ENCODE measurements at regions of chr14 and their contacts with region 1.

Region 1: GRCh38 chr14:32252030-32252670 is 49.1 kb upstream of the RNU6-8 start:
- DNase-seq: peak; percentile 62
- ATAC-seq: peak; percentile 89
- H3K4me3 ChIP-seq: no peak overlapping the region
- H3K27ac ChIP-seq: no peak overlapping the region
- H3K4me1 ChIP-seq: peaks cover 0 to 10% of the 10 kb centered on the region in 2 experiments; a peak in 2 of 4 replicates
- H3K27me3 ChIP-seq: no peaks in the 10 kb centered on the region
- CTCF ChIP-seq: peak; percentile 81 to 93 (median 89)
- POLR2A ChIP-seq: no peak
- RAD21 ChIP-seq: peak; percentile 96

Region 2: DNA sequence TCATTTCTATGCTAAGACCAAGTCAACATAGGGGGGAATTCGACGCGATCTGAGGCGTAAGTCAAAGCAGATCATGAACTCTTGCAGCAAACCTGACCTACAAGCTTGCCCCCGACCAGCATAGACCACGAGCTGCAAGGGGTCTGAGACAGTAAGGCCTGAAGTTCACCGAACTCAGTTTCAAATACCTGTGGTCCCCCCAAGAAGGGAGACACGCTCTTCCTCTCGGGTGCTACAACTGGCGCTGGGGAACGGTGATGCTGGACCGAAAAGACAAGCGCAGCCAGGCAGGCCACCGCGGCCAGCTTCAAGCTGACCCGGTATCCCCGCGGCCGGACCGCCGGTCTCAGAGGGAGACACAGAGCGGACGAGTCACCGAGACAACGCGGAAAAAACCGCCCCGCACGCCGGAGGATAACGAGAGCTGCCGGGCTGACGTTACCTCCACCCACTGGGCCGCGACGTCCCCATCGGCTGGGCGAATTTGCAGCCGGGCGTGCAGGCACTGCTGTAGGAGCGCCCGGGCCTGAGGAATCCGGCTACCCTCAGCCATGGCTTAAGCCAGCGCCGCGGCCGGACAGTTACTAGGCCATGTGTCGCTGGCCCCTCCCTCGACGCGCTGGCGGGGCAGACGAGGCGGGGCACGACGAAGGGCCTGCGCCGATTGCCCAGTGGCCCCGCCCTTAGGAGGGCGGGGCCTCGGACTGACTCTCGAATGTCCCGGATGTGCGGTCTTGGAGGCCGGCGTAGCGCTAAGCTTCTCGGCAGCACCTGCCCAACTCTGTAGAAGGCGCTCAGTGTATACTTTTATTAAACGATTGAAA is 795.1 kb before region 1 on chr14 and contains the start of gene DTD2:
- CTCF ChIA-PET with region 1: interaction called, 5 read pairs
- POLR2A ChIA-PET with region 1: no interaction called
- RAD21 ChIA-PET with region 1: no interaction called
- intact Hi-C with region 1: loop called (anchors 10 kb)
- DNase-seq: peak; percentile 90
- ATAC-seq: peak; percentile 99
- H3K4me3 ChIP-seq: peak within 1 kb of the TSS; percentile 86 to 88
- H3K27ac ChIP-seq: peak within 1 kb of the TSS; percentile 76
- H3K4me1 ChIP-seq: peaks cover 4 to 11% of the 10 kb centered on the region in 2 experiments; a peak in 2 of 4 replicates
- H3K27me3 ChIP-seq: no peaks in the 10 kb centered on the region
- CTCF ChIP-seq: no peak
- POLR2A ChIP-seq: peak; percentile 81
- RAD21 ChIP-seq: no peak; the same call in 1 of the 2 replicates
- total RNA-seq, gene DTD2: 24.6 TPM

Region 3: GRCh38 chr14:31926123-31926522 is 326.0 kb before region 1 on chr14:
- CTCF ChIA-PET with region 1: interaction called, 15 read pairs
- POLR2A ChIA-PET with region 1: no interaction called
- RAD21 ChIA-PET with region 1: no interaction called
- intact Hi-C with region 1: loop called (anchors 2 kb)
- DNase-seq: peak; percentile 54
- ATAC-seq: peak; percentile 84
- H3K4me3 ChIP-seq: no peak overlapping the region
- H3K27ac ChIP-seq: no peak overlapping the region
- H3K4me1 ChIP-seq: peaks cover 0 to 18% of the 10 kb centered on the region in 2 experiments; a peak in 2 of 4 replicates
- H3K27me3 ChIP-seq: no peaks in the 10 kb centered on the region
- CTCF ChIP-seq: peak; percentile 52 to 80 (median 72); a peak in 5 of 6 replicates
- POLR2A ChIP-seq: no peak
- RAD21 ChIP-seq: peak; percentile 57

Region 4: GRCh38 chr14:32076278-32077080 is 175.7 kb before region 1 on chr14:
- CTCF ChIA-PET with region 1: interaction called, 21 read pairs
- POLR2A ChIA-PET with region 1: no interaction called
- RAD21 ChIA-PET with region 1: interaction called in 1 of 2 experiments, 3 read pairs
- intact Hi-C with region 1: loop called (anchors 1 kb)
- DNase-seq: peak; percentile 90
- ATAC-seq: peak; percentile 88
- H3K4me3 ChIP-seq: peak overlapping the region; percentile 84 to 93
- H3K27ac ChIP-seq: peak overlapping the region; percentile 87
- H3K4me1 ChIP-seq: peaks cover 19 to 52% of the 10 kb centered on the region in 2 experiments
- H3K27me3 ChIP-seq: no peaks in the 10 kb centered on the region
- CTCF ChIP-seq: no peak
- POLR2A ChIP-seq: peak; percentile 68
- RAD21 ChIP-seq: no peak

Region 5: GRCh38 chr14:32212833-32213232 is 39.3 kb before region 1 on chr14:
- CTCF ChIA-PET with region 1: no interaction called
- POLR2A ChIA-PET with region 1: no interaction called
- RAD21 ChIA-PET with region 1: no interaction called
- intact Hi-C with region 1: no loop called
- DNase-seq: no peak
- ATAC-seq: no peak
- H3K4me3 ChIP-seq: no peak overlapping the region
- H3K27ac ChIP-seq: no peak overlapping the region
- H3K4me1 ChIP-seq: peaks cover 11 to 15% of the 10 kb centered on the region in 2 experiments
- H3K27me3 ChIP-seq: no peaks in the 10 kb centered on the region
- CTCF ChIP-seq: no peak
- POLR2A ChIP-seq: no peak
- RAD21 ChIP-seq: no peak

Region 6: DNA sequence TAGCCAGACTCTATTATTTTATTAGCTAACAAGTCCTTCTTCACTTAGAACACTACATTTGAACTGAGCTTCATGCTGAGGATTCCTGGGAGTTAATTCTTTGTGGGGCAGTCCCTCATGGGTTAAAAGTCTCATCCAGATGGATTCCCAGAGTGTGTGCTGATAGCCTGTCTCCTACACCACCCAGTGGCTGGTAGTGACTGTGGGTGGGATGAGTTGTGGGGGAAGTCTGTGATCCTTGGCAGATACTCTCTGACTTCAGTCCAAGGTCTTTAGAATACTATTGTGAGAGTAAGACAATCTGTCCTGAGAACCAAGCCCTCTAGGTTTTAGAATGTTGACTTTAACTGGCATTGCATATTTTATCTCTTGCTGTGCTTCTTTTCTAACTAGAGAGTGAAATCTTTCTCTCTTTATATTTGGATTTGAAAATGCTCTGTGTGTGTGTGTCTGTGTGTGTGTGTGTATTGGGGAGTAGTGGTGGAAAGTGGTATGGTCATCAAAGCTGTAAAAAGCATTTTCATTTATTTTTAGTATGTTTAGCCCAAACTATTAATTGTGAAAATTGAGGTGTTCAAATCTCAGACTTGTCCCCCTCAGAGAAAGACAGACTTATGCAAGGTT is 114.2 kb after region 1 on chr14:
- CTCF ChIA-PET with region 1: no interaction called
- POLR2A ChIA-PET with region 1: no interaction called
- RAD21 ChIA-PET with region 1: no interaction called
- intact Hi-C with region 1: no loop called
- DNase-seq: no peak
- ATAC-seq: peak; percentile 50
- H3K4me3 ChIP-seq: no peak overlapping the region
- H3K27ac ChIP-seq: no peak overlapping the region
- H3K4me1 ChIP-seq: peaks cover 0 to 12% of the 10 kb centered on the region in 2 experiments; a peak in 2 of 4 replicates
- H3K27me3 ChIP-seq: no peaks in the 10 kb centered on the region
- CTCF ChIP-seq: 0 out of 6 replicates have a peak, but pooled peaks of 1 of the 3 experiments have one; percentile 12
- POLR2A ChIP-seq: no peak
- RAD21 ChIP-seq: peak; percentile 43

Region 7: GRCh38 chr14:32393118-32393517 is 141.0 kb after region 1 on chr14:
- CTCF ChIA-PET with region 1: no interaction called
- POLR2A ChIA-PET with region 1: no interaction called
- RAD21 ChIA-PET with region 1: no interaction called
- intact Hi-C with region 1: no loop called
- DNase-seq: no peak
- ATAC-seq: no peak
- H3K4me3 ChIP-seq: no peak overlapping the region
- H3K27ac ChIP-seq: no peak overlapping the region
- H3K4me1 ChIP-seq: no peaks in the 10 kb centered on the region
- H3K27me3 ChIP-seq: no peaks in the 10 kb centered on the region
- CTCF ChIP-seq: no peak
- POLR2A ChIP-seq: no peak
- RAD21 ChIP-seq: no peak

Region 8: GRCh38 chr14:32469388-32470160 is 217.4 kb after region 1 on chr14:
- CTCF ChIA-PET with region 1: interaction called, 29 read pairs
- POLR2A ChIA-PET with region 1: no interaction called
- RAD21 ChIA-PET with region 1: interaction called, 3 read pairs
- intact Hi-C with region 1: loop called (anchors 1 kb)
- DNase-seq: peak; percentile 26
- ATAC-seq: no peak; the same call in 1 of the 2 replicates
- H3K4me3 ChIP-seq: no peak overlapping the region
- H3K27ac ChIP-seq: no peak overlapping the region
- H3K4me1 ChIP-seq: no peaks in the 10 kb centered on the region
- H3K27me3 ChIP-seq: no peaks in the 10 kb centered on the region
- CTCF ChIP-seq: peak; percentile 20 to 64 (median 42); a peak in 5 of 6 replicates
- POLR2A ChIP-seq: no peak
- RAD21 ChIP-seq: peak; percentile 64

Region 9: GRCh38 chr14:32560209-32560857 is 308.2 kb after region 1 on chr14:
- CTCF ChIA-PET with region 1: interaction called, 15 read pairs
- POLR2A ChIA-PET with region 1: no interaction called
- RAD21 ChIA-PET with region 1: interaction called in 1 of 2 experiments, 6 read pairs
- intact Hi-C with region 1: loop called (anchors 2 kb)
- DNase-seq: peak; percentile 54
- ATAC-seq: peak; percentile 95
- H3K4me3 ChIP-seq: no peak overlapping the region
- H3K27ac ChIP-seq: no peak overlapping the region
- H3K4me1 ChIP-seq: no peaks in the 10 kb centered on the region
- H3K27me3 ChIP-seq: no peaks in the 10 kb centered on the region
- CTCF ChIP-seq: peak; percentile 35 to 97 (median 87); a peak in 5 of 6 replicates
- POLR2A ChIP-seq: no peak
- RAD21 ChIP-seq: peak; percentile 77

Measured in HCT116 (cell line).